ENCODE measurements at regions of chr2 and their contacts with region 1.

Region 1: DNA sequence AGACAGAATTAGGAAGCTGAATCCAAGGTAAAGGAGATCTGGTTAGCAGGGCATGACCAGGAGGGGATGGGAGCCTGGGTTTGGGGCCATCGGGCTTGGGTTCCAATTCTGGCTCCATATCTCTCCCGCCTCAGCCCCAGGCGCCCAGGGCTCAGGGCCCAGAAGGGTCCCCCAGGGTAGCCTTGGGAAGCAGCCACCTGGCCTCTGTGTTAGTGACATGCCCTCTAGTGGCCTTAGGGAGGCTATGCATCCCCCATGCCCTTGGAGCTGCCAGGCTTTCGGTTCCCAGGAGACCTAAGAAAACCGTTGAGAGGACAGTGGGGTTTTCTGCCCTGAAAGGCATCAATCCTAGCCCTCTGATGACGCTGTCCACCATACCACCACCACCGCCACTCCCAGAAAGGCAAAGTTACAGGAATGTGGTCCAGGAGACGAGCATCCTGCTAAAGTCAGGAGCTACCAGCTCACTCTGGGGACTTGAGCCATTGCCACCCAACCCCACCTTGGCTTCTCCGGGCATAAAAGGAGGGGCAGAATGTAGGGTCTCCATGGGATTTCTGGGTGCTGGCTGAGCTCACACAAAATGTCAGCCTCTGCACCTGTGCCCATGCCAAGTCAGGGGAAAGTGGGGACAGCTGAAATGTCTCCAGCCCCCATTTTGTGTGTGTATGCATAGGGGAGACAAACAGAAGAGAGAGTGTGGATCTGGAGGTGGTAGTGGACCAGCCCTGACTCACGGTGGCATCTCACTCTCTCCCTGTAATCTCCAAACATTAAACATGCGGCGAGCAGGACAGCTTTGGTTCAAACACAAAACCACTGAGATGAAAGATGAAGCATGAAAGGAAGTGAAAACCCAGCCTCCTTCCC is 56.5 kb downstream of the EMX1 start:
- DNase-seq: peak; percentile 84
- CTCF ChIP-seq: peak; percentile 85

Region 2: DNA sequence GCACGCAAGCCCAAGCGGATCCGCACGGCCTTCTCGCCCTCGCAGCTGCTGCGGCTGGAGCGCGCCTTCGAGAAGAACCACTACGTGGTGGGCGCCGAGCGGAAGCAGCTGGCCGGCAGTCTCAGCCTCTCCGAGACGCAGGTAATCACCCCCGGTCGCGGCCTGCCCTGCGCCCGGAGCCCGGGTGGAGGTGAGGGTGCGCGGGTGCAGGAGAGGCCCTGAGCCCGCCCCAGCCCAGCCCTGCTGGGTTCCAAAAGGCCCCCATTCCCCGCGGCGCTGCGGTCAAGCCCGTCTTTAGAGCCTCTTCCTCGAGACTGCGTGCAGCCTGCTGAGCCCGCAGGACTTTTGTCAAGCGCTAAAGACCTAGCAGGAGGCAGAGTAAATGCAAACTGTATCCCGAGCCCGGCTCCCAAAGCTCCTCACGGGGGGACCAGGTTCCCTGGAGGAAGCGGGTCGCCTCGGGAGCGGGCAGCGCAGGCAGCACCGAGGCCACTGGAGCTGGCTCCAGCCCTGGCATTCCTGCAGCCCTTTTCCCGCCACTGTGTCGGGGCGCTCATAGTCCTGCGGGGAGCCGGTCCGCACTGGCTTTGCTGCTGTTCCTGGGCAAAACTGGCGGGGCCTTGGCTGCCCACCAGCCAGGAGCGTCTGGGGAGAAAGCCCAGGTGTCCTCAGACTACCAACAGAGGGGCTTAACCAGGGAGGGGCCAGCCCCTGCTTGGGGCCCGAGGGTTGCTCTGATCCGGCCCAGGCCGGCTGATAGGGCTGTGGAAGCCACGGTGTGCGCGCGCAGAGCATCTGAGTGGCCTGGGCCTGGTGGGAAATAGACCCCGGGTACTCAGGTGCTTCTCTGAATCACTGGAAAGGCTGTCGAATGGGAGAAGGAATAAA is 49.2 kb before region 1 on chr2:
- CTCF ChIA-PET with region 1: interaction called, 13 read pairs
- POLR2A ChIA-PET with region 1: no interaction called
- DNase-seq: no peak
- CTCF ChIP-seq: no peak

Region 3: DNA sequence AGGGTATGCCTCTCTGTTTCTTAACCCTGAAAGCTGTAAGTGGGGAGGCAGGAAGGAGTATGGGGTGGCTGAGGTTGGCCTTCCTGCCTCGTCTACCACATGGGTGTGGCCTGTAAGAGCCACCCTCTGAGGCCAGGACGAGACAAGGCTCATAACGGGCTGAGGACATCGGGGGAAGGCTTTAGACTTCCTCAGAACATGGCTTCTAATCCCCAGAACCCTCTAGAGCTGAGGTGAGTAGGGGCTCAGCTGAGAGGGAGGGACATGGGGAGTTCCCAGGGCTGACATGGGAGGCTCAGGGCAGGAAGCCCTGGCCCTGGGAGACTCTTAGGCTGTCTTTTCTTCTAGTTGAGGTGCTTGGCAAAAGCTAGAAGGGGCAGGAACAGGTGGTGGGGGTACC is 19.8 kb before region 1 on chr2:
- CTCF ChIA-PET with region 1: interaction called, 11 read pairs
- POLR2A ChIA-PET with region 1: no interaction called
- DNase-seq: no peak
- CTCF ChIP-seq: no peak

Region 4: GRCh38 chr2:72963423-72964145 is 10.2 kb before region 1 on chr2:
- CTCF ChIA-PET with region 1: interaction called, 16 read pairs
- POLR2A ChIA-PET with region 1: no interaction called
- DNase-seq: no peak
- CTCF ChIP-seq: no peak

Region 5: DNA sequence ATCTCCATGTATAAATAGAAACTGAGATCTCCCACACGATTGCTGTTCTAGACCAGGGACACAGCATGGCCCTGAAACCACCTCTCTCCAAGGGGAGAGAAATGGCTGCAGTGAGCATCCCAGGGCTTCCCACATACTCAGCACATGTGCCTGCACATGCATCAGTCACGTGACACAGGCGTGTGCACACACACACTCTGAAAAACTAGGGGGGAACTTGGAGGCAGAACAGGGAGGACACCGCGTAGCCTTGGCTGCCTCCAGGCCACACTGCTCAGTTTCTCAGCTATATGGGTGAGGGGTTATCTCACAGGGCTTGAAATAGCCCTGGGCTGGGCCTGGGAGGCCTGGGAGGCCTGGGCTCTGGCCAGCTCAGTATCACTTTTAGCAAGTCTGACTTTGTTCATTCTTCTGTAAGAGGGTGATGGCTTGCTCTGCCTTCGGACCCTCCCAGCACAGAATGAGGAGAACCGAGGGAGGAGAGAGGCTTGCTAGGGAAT is 10.4 kb after region 1 on chr2:
- CTCF ChIA-PET with region 1: interaction called, 43 read pairs
- POLR2A ChIA-PET with region 1: no interaction called
- DNase-seq: no peak
- CTCF ChIP-seq: no peak

Region 6: DNA sequence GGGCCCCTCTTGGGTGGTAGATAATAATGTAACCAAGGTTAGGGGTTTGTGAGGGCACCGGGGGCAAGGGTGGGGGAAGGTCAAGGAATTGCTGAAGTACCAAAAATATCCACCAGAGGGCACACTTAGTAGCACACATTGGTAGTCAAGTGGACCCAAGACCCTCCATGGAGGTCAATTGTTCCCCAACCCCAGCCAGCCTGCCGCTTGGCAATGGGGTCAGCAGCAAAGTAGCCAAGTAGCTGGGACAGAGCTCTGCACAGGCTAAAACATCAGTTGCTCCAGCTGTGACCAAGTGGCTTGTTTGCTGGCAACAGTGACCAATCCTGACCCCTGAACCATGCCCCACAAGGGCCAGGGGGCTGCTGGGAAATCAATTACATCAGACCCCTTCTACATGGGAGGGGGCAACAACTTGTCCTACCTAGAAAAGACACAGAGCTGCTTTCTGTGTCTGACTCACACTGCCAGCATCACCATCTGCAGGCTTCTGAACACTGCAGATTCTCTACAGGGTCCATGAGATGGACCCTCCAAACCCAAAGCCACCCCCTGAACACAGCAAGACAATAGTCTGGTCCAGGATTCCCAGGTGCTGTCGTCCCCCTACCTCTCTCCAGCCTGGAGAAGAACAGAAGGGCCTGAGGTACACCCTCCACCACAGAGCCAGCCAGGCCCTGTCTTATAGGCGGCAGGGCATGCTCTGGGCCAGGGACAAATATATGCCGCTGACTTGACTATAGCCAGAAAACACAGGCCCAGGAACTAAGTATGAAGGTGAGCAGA is 19.5 kb after region 1 on chr2:
- CTCF ChIA-PET with region 1: interaction called, 43 read pairs
- POLR2A ChIA-PET with region 1: no interaction called
- DNase-seq: peak; percentile 78
- CTCF ChIP-seq: peak; percentile 70

Region 7: DNA sequence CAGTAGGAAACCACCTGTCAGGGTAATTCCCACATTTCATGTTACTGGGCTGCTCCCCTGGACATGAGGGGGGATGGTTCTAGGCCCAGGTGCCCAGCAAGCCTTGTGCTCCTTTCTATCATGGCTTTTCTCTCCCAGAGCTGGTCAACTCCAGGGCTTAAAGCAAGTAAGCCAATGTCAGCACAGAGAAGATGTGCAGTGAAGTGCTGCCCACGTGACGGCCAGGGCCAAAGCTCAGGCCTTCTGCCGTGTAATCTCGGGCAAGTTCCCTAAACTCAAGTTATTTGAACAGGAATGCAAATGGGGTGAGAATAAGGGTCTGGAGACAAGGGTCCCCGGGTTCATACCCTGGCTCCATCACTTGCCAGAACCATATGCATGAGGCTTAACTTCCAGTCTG is 81.2 kb after region 1 on chr2:
- CTCF ChIA-PET with region 1: no interaction called
- POLR2A ChIA-PET with region 1: no interaction called
- DNase-seq: no peak
- CTCF ChIP-seq: no peak

Region 8: DNA sequence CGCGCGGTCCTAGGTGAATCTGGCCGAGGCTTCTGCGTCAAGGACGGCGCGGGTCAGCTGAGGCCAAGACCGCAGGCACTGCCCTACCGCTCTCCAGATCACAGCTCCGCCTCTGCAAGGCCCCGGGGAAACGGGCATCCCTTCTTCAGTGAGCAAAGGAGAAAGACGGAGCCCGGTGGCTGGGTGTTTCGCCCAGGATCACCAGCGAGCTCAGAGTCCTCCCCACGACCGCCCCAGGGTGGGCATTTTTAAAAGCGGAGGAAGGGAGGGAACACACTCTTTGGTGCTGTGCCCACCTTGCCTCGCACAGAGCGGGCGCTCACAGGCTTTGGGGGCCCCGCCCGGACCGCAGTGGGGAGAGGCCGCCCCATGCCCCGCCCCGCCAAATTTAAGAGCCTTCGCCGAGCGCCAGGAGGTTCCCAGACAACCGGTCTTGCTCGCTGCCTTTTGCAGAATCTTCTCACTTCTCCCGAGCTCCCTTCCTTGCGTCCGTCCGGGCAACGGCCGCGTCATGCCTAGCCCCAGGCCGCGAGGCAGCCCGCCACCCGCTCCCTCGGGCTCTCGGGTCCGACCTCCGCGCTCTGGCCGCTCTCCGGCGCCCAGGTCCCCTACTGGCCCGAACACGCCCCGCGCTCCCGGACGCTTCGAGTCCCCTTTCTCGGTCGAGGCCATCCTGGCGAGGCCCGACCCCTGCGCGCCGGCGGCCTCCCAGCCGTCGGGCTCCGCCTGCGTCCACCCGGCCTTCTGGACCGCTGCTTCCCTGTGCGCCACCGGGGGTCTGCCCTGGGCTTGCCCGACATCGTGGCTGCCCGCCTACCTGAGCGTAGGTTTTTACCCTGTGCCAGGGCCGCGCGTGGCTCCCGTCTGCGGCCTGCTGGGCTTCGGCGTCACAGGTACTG is 228.6 kb after region 1 on chr2 and contains the start of gene NOTO:
- CTCF ChIA-PET with region 1: no interaction called
- POLR2A ChIA-PET with region 1: no interaction called
- DNase-seq: no peak
- CTCF ChIP-seq: no peak